ENCODE measurements at regions of chr1 and their contacts with region 1.

Region 1: DNA sequence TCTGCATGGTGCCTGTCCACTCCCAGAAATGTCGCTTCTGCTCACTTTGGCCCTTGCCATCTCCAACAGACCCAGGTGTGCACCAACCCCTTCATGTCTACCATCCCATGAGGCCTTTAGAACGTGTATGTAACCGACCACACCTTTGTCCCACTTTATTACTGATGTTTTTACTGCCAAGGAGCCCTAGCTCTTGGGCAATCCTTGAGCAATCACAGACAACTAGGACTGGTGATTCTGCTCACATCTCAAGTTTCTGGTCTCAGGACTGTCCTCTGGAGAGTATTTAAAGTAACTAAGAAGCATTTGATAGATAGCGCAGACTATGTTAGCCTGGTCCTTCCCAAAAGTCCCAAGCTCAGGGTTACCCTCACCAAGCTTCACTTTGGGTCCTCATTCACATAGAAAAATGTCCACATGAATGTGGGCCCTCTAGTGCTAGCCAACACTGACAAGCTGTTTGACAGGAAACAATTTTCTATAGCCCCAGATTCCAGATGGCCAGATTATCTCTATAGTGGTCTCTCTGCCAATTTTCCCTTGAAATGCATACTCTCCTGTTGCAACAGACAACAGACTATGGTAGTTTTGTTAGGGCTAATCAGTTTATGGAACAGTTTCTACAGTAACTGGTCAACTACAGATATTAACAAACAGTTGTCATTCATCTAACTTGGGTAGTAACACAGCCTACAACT is 6.9 kb upstream of the TMEM81 start:
- DNase-seq: peak; percentile 75
- H3K4me3 Mint-ChIP-seq: no peak overlapping the region
- H3K27ac Mint-ChIP-seq: peak overlapping the region; percentile 40
- H3K4me1 Mint-ChIP-seq: peaks cover 15% of the 10 kb centered on the region
- H3K27me3 Mint-ChIP-seq: no peaks in the 10 kb centered on the region
- CTCF ChIP-seq: no peak

Region 2: DNA sequence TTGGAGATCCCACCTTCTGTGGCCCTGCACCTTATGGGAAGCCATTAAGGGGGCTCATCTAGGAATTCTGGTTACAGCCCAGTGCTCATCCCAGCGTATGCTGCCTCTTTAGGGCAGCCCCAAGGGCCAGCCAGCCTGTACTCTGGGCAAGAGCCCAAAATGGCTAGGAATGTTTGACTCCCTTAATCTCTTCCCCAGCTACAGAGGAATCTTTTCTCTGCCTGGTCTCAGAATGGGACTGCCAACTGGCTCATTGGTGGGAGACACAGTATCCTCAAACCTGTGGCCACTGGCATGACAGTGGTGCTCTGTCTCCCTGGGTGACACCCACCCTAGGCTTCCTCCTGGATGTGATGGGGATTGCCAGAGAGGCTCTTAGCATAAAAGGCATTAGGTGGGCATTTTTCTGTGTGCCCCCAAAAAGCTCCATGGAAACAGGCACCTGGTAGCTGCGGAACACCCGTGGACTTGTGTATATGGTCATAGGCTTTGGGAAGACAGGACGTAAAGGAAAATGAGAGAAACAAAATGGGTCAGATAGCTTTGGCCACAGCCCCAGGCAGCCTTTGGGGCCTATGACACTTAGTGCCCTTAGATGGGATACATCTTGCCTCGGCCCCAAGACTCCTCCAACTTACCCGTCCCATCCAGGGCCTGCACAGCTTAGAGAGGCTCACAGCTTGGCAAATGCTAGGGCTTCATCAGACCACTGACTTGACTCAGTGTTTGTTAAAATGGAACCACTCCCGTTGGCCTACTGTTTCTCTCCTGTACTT is 13.8 kb before region 1 on chr1:
- CTCF ChIA-PET with region 1: interaction called, 4 read pairs
- POLR2A ChIA-PET with region 1: interaction called, 13 read pairs
- intact Hi-C with region 1: no loop called
- DNase-seq: no peak
- H3K4me3 Mint-ChIP-seq: no peak overlapping the region
- H3K27ac Mint-ChIP-seq: no peak overlapping the region
- H3K4me1 Mint-ChIP-seq: peaks cover 28% of the 10 kb centered on the region
- H3K27me3 Mint-ChIP-seq: no peaks in the 10 kb centered on the region
- CTCF ChIP-seq: no peak

Region 3: DNA sequence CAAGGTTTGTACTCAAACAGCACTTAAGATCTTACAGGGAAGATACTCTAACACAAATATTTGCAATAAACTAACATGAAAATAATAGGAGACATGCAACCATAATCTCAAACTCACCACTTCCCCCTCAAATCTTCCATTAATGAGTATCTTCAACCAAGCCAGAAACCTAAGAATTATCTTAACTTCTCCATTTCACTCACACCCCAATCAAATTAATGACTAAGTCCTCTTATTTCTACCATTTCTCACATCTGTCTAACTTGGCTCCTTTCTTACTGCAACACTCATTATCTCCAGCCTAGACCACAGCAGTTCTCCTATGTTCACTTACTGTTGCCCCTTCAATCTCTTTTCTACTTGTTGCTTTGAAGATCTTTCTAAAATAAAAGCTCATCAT is 20.2 kb after region 1 on chr1:
- CTCF ChIA-PET with region 1: interaction called, 15 read pairs
- POLR2A ChIA-PET with region 1: interaction called, 3 read pairs
- intact Hi-C with region 1: no loop called
- DNase-seq: no peak
- H3K4me3 Mint-ChIP-seq: no peak overlapping the region
- H3K27ac Mint-ChIP-seq: no peak overlapping the region
- H3K4me1 Mint-ChIP-seq: no peaks in the 10 kb centered on the region
- H3K27me3 Mint-ChIP-seq: no peaks in the 10 kb centered on the region
- CTCF ChIP-seq: no peak

Region 4: DNA sequence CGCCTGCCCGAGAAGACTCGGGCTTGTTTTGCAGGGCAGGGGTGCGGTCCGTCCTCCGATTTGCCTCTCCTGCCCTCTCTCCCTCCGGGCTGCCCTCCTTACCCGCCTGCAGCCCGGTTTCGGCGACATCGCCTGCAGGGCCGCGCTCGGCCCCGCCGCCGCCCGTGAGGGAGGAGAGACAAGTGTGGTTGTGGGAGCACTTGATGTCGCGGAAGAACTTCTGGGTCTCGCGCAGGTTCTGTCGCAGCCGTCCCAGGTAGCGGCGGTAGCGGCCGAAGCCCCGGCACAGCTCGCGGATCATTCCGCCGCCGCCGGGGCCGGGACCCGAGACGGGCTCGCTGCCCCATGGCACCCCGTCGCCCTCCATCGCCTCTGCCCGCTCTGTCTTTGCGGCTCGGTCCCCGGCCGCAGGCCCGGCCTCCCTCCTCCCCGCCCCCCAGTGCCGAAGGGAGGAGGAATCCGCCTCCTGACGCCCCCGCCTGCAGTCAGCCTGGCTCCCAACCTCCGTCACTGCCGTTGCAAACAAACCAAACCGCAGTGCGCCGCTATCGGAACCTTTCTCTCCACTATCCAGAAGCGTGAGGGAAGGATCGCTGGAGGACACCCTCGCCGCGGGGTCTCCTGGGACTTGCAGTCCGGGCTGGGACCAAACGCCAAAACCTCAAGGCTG is 120.1 kb after region 1 on chr1 and contains the start of gene DSTYK:
- CTCF ChIA-PET with region 1: no interaction called
- POLR2A ChIA-PET with region 1: no interaction called
- intact Hi-C with region 1: no loop called
- DNase-seq: peak; percentile 99
- H3K4me3 Mint-ChIP-seq: peak within 1 kb of the TSS; percentile 73
- H3K27ac Mint-ChIP-seq: peak within 1 kb of the TSS; percentile 94
- H3K4me1 Mint-ChIP-seq: peaks cover 12% of the 10 kb centered on the region
- H3K27me3 Mint-ChIP-seq: peaks cover 12% of the 10 kb centered on the region
- CTCF ChIP-seq: no peak
- total RNA-seq, gene DSTYK: 18.4 and 21.5 TPM in 2 replicates